Aorta (tissue), 5 donors: ENCODE measurements at regions of chr12 and their contacts with region 1.

Region 1: DNA sequence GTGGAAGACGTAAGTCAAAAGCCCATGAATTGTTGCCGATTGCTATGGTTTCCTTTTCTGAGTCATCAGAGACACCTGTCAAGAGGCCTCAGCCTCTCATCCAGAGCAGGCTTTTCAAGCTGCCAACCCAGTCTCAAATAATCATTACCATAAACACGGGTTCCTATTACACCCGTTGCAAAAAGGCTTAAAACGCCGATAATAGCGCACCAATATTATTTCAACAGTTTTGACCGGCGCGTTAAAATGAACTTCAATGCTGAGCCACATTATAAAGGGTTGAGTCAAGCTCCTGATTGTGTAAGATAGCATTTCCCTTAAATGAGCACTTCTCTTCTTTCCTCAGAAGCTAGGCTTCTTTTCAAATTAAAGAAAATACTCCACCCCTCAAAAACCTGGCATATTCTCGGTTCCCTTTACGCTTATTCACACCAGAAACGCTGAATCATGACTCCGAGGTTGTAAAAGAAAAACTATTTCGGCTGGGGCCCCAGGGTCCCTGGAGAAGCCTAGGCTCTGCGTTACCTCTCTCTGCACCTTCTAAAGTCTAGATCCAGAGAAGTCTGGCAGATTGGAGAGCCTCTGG is 1.4 kb downstream of the TMTC1 start:
- DNase-seq: no peak
- ATAC-seq: peak; percentile 61
- H3K4me3 ChIP-seq: peak overlapping the region; percentile 42 to 95
- H3K27ac ChIP-seq: peak overlapping the region in 1 of 2 donors; percentile 80
- H3K4me1 ChIP-seq: peaks cover 0 to 3% of the 10 kb centered on the region in 2 donors
- H3K27me3 ChIP-seq: no peaks in the 10 kb centered on the region

Region 2: GRCh38 chr12:29552324-29552927 is 230.0 kb before region 1 on chr12:
- intact Hi-C with region 1: loop called (anchors 10 kb)
- DNase-seq: peak; percentile 66 to 87
- ATAC-seq: peak; percentile 88
- H3K4me3 ChIP-seq: no peak overlapping the region
- H3K27ac ChIP-seq: no peak overlapping the region
- H3K4me1 ChIP-seq: peaks cover 0 to 2% of the 10 kb centered on the region in 2 donors
- H3K27me3 ChIP-seq: no peaks in the 10 kb centered on the region

Region 3: DNA sequence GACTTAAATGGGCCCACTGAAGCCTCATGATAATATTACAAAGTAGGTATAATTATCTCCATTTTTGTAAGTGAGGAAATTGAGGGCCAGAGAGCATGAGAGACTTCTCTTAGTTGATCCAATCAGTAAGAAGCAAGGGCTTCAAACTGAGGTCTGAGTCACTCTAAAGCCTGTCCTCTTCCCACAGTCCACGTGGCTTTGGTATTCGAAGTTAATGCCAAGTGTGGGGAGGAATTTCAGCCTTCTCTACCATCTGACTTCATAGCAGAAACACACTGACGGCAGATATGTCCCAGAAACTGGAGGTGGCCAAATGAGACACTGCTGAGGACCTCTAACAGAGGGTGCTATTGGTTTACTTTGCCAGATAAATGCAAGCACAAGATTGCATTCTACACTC is 170.5 kb before region 1 on chr12:
- intact Hi-C with region 1: loop called in 1 of 2 experiments (anchors 2 kb)
- DNase-seq: no peak
- ATAC-seq: peak; percentile 58
- H3K4me3 ChIP-seq: no peak overlapping the region
- H3K27ac ChIP-seq: no peak overlapping the region
- H3K4me1 ChIP-seq: peaks cover 4 to 12% of the 10 kb centered on the region in 2 donors
- H3K27me3 ChIP-seq: no peaks in the 10 kb centered on the region

Region 4: GRCh38 chr12:29733060-29733459 is 49.3 kb before region 1 on chr12:
- intact Hi-C with region 1: loop called in 1 of 2 experiments (anchors 5 kb)
- DNase-seq: no peak
- ATAC-seq: no peak
- H3K4me3 ChIP-seq: no peak overlapping the region
- H3K27ac ChIP-seq: no peak overlapping the region
- H3K4me1 ChIP-seq: peaks cover 2 to 11% of the 10 kb centered on the region in 2 donors
- H3K27me3 ChIP-seq: no peaks in the 10 kb centered on the region

Region 5: DNA sequence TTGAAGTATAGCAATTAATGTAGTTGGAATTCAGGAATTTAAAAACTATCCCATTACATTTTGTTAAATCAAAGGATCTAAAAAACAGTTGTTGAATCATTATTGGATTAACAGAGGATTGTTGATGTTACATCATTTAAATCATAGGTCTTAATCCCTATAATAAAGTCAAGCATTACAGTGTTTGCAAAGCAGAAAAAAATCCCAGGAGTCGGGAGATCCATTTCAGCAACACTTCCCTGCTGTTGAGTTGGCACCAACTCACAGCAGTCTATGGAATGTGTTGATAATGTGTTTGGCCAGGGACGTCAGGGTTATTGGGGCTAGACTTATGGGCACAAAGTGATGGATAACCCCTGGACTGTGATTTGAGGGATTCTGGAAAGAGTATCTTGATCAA is 100.5 kb after region 1 on chr12:
- intact Hi-C with region 1: loop called in 1 of 2 experiments (anchors 5 kb)
- DNase-seq: no peak
- ATAC-seq: no peak
- H3K4me3 ChIP-seq: no peak overlapping the region
- H3K27ac ChIP-seq: peak overlapping the region in 1 of 2 donors; percentile 43
- H3K4me1 ChIP-seq: peaks cover 2 to 9% of the 10 kb centered on the region in 2 donors
- H3K27me3 ChIP-seq: no peaks in the 10 kb centered on the region

Region 6: GRCh38 chr12:30006021-30006420 is 223.6 kb after region 1 on chr12:
- intact Hi-C with region 1: loop called in 1 of 2 experiments (anchors 5 kb)
- DNase-seq: no peak
- ATAC-seq: peak; percentile 81
- H3K4me3 ChIP-seq: peak overlapping the region in 1 of 2 donors; percentile 24
- H3K27ac ChIP-seq: peak overlapping the region in 1 of 2 donors; percentile 86
- H3K4me1 ChIP-seq: peaks cover 5 to 8% of the 10 kb centered on the region in 2 donors
- H3K27me3 ChIP-seq: no peaks in the 10 kb centered on the region

Region 7: DNA sequence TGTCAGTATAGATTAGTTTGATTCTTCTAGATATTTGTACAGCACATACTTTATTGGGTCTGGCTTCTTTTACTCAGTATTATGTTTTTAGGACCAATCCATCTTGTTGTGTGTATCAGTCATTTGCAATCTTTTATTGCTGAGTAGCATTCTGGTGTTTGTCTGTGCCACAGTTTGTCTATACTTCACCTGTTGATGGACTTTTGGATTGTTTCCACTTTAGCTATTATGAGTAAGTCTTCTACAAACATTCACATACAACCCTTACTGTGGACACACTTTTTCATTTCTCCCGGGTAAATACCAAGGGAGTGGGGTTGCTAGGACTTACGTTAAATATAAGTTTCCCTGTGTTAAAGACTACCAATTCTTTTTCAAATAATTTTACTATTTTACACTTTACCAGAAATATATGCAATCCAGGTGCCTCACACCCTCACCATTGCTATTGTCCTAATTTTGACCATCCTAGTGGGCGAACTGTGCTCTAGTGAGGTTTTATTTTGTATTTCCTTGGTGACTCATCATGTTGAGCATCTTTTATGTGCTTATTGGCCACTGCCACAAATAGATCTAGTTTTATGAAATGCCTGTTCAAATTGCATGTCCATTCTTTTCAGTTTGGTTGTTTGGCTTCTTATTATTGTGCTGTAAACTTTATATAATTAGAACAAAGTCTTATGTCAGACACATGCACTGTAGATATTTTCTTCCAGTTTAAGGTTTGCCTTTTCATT is 306.0 kb after region 1 on chr12:
- intact Hi-C with region 1: no loop called
- DNase-seq: no peak
- ATAC-seq: no peak
- H3K4me3 ChIP-seq: no peak overlapping the region
- H3K27ac ChIP-seq: no peak overlapping the region
- H3K4me1 ChIP-seq: no peaks in the 10 kb centered on the region
- H3K27me3 ChIP-seq: no peaks in the 10 kb centered on the region

Region 8: GRCh38 chr12:31228811-31229792 is 1446.7 kb after region 1 on chr12:
- intact Hi-C with region 1: no loop called
- DNase-seq: peak in 1 of 2 donors; percentile 61
- ATAC-seq: peak; percentile 68
- H3K4me3 ChIP-seq: no peak overlapping the region
- H3K27ac ChIP-seq: no peak overlapping the region
- H3K4me1 ChIP-seq: no peaks in the 10 kb centered on the region
- H3K27me3 ChIP-seq: no peaks in the 10 kb centered on the region